Activated naive CD4-positive, alpha-beta T cell treated with anti-CD3 and anti-CD28 coated beads for 36 hours (primary cell): ENCODE measurements at regions of chr9 and their contacts with region 1.

Region 1: DNA sequence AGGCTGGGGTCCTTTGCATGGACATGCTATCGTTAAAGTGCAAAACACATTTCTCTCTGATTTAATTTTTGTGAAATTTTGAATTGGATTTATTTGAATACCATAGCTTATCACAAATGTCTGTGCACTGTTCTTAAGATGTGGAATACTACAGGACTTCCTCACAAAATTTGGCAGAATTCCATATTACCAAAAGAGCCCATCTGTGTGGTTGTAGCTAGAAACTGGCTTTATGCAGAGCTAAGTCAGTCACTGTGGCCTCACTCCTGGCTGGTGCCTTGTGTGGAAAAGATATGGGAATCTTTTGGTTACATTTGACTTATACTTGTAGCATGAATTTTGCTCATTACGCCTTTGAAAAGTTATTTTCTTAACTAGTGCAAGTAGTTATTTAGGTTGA is 35.5 kb downstream of the ACO1 start:
- DNase-seq: no peak
- H3K4me3 Mint-ChIP-seq: no peak overlapping the region
- H3K27ac Mint-ChIP-seq: no peak overlapping the region
- H3K4me1 Mint-ChIP-seq: no peaks in the 10 kb centered on the region
- H3K27me3 Mint-ChIP-seq: no peaks in the 10 kb centered on the region

Region 2: DNA sequence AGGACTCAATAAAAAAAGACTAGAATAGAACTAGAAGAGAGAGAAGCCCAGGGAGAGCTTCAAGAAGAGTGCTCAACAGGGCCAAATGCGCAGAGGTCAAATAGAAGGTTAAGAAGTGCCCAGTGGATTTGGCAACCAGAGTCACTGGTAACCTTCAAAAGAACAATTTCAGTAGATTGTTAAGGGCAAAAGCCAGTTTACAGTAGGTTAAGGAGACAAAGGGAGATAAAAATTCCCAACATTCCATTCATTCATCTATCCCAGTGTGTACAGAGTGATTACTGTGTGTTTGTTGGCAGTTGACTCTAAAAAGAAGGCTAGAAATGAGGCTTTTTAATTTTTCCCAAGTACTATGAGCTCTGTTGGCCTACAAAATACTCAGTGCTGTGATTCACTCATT is 36.6 kb after region 1 on chr9:
- CTCF ChIA-PET with region 1: no interaction called
- intact Hi-C with region 1: loop called (anchors 5 kb)
- DNase-seq: no peak
- H3K4me3 Mint-ChIP-seq: no peak overlapping the region
- H3K27ac Mint-ChIP-seq: no peak overlapping the region
- H3K4me1 Mint-ChIP-seq: no peaks in the 10 kb centered on the region
- H3K27me3 Mint-ChIP-seq: no peaks in the 10 kb centered on the region